Activated T-helper 1 cell treated with anti-CD3 and anti-CD28 coated beads, Interleukin-12 subunit alpha, Interleukin-12 subunit beta, Interleukin-2, Interleukin-4 antibody, amounts not matched to agents 30 ng/mL and 10 ng/mL and 1 ng/mL, durations not matched to agents 14 hours and 24 hours and 36 hours (primary cell): ENCODE measurements at regions of chr15 and their contacts with region 1.

Region 1: GRCh38 chr15:43150191-43150929 is 17.0 kb downstream of the TMEM62 start:
- DNase-seq: no peak
- H3K4me3 Mint-ChIP-seq: no peak overlapping the region
- H3K27ac Mint-ChIP-seq: no peak overlapping the region
- H3K4me1 Mint-ChIP-seq: peaks cover 17% of the 10 kb centered on the region
- H3K27me3 Mint-ChIP-seq: no peaks in the 10 kb centered on the region

Region 2: GRCh38 chr15:43133430-43134156 is 16.8 kb before region 1 on chr15 and contains the start of gene TMEM62:
- intact Hi-C with region 1: loop called (anchors 2 kb)
- DNase-seq: peak; percentile 67
- H3K4me3 Mint-ChIP-seq: peak within 1 kb of the TSS; percentile 96
- H3K27ac Mint-ChIP-seq: peak within 1 kb of the TSS; percentile 90
- H3K4me1 Mint-ChIP-seq: peaks cover 33% of the 10 kb centered on the region
- H3K27me3 Mint-ChIP-seq: peaks cover 9% of the 10 kb centered on the region
- total RNA-seq, gene TMEM62: 16.4 and 18.6 TPM in 2 replicates